ENCODE measurements at regions of chr11 and their contacts with region 1.

Region 1: DNA sequence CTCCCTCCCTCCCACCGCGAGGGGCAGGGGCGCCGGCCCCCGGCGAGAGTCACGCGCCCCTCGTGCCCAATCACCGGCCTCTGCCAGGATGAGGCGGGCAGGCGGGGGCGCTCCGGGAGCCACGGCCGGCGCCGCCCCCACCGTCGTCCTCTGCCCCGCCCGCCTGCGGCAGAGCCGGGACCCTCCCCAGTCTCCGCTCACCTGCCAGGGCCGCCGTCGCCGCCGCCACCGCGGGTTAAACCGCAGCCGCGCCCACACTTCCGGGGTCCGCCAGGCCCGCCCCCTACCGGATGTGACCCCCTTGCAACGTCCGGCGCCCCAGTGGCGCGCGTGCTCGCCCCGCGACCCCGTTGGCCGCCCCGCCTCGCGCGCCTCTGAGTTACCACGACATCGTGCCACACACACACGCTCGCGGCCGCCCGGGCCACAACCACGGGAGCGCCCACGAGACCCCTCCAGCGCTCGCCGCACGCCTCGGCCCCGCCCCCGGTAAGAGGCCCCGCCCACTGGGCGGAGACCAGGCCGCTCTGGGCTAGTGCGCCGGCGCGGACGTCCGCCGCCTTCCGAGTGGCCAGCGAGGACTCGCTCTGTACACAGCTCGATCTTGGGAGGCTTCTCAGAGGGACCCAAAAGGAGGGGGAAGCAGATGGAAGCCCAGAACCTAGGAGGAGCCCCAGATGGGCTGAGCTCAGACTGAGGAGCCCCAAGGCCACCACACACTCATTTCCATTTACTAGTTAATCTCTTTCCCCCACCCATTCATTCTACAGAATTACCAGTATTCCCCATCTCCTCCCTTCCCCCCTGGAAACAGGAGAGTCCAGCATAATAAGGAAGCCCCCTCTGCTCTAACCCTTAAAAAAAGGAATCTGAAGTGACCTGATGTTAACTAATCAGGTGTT is at the start of gene VPS37C:
- DNase-seq: peak; percentile 90 to 95 (median 94)
- H3K4me3 ChIP-seq: peak within 1 kb of the TSS; percentile 56 to 76 (median 68)
- H3K4me3 Mint-ChIP-seq: peak within 1 kb of the TSS; percentile 85 to 93
- H3K27ac ChIP-seq: peak within 1 kb of the TSS; percentile 93 to 100
- H3K27ac Mint-ChIP-seq: peak within 1 kb of the TSS; percentile 99 to 100 (median 100)
- H3K4me1 ChIP-seq: peaks cover 64 to 71% of the 10 kb centered on the region in 2 donors
- H3K4me1 Mint-ChIP-seq: peaks cover 75% of the 10 kb centered on the region
- H3K27me3 ChIP-seq: no peaks in the 10 kb centered on the region
- H3K27me3 Mint-ChIP-seq: peaks cover 0 to 10% (median 0%) of the 10 kb centered on the region in 3 donors
- CTCF ChIP-seq: no peak
- polyA plus RNA-seq, gene VPS37C: 1.9 to 25.1 (median 3.8) TPM

Region 2: GRCh38 chr11:59967677-59968394 is 1193.6 kb before region 1 on chr11:
- intact Hi-C with region 1: no loop called
- DNase-seq: no peak
- H3K4me3 ChIP-seq: no peak overlapping the region
- H3K4me3 Mint-ChIP-seq: no peak overlapping the region
- H3K27ac ChIP-seq: no peak overlapping the region
- H3K27ac Mint-ChIP-seq: no peak overlapping the region
- H3K4me1 ChIP-seq: no peaks in the 10 kb centered on the region
- H3K4me1 Mint-ChIP-seq: no peaks in the 10 kb centered on the region
- H3K27me3 ChIP-seq: no peaks in the 10 kb centered on the region
- H3K27me3 Mint-ChIP-seq: peaks cover 0 to under 1% (median 0%) of the 10 kb centered on the region in 3 donors
- CTCF ChIP-seq: no peak

Region 3: DNA sequence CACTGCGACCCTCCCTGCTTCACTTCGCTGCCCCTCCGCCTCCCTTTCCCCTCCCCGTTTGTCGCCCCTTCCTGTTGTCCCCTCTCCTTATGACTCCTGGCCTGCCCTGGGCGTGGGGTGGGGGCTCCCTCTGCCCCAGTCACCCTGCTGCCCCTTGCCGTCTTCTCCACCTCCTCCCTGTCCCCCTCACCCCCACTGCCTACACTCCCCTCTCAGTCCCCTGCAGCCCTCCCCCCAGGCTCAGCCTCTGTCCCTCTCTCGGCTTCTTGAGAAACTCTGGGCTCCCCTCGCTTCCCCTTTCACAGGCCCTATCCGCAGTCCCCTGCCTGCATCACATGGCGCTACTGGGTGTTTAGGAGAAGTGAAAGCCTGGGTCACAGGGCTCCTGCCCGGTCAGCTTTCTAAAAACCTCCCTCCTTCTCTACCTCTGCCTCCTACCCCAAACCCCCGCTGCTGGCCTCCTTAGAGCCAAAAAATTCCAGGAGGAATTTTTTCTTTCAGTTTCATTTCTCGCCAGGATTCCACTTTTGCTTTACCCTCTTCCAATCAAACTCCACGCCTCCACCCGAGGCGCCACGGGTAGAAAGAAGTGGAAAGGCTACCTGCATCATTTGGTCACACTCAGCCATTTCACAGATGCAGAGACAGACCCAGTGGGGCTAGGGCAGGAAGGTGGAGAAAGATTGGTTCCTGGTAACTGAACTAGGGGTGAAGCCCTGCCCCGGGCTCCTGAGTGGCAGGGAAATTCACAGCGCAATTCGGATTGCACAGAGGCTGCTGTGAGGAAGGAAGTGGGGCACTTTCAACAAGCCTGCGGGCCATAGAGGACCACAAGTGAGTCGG is 209.3 kb before region 1 on chr11 and contains the start of gene SLC15A3:
- intact Hi-C with region 1: loop called (anchors 2 to 5 kb)
- DNase-seq: peak; percentile 95 to 98 (median 95)
- H3K4me3 ChIP-seq: peak within 1 kb of the TSS; percentile 74 to 94 (median 82)
- H3K4me3 Mint-ChIP-seq: peak within 1 kb of the TSS; percentile 95 to 96
- H3K27ac ChIP-seq: peak within 1 kb of the TSS; percentile 99 to 100
- H3K27ac Mint-ChIP-seq: peak within 1 kb of the TSS; percentile 99 to 100 (median 100)
- H3K4me1 ChIP-seq: peaks cover 69 to 85% of the 10 kb centered on the region in 2 donors
- H3K4me1 Mint-ChIP-seq: peaks cover 73% of the 10 kb centered on the region
- H3K27me3 ChIP-seq: no peaks in the 10 kb centered on the region
- H3K27me3 Mint-ChIP-seq: peaks cover 9 to 17% (median 15%) of the 10 kb centered on the region in 3 donors
- CTCF ChIP-seq: no peak
- polyA plus RNA-seq, gene SLC15A3: 27.1 to 121 (median 35.0) TPM

Region 4: GRCh38 chr11:61061081-61061826 is 100.2 kb before region 1 on chr11:
- intact Hi-C with region 1: loop called in 1 of 2 experiments (anchors 10 kb)
- DNase-seq: peak; percentile 91 to 99 (median 93)
- H3K4me3 ChIP-seq: peak overlapping the region in 1 of 3 experiments; percentile 2
- H3K4me3 Mint-ChIP-seq: peak overlapping the region; percentile 34 to 72
- H3K27ac ChIP-seq: peak overlapping the region; percentile 60 to 69
- H3K27ac Mint-ChIP-seq: peak overlapping the region; percentile 89 to 96 (median 94)
- H3K4me1 ChIP-seq: peaks cover 32 to 34% of the 10 kb centered on the region in 2 donors
- H3K4me1 Mint-ChIP-seq: peaks cover 42% of the 10 kb centered on the region
- H3K27me3 ChIP-seq: no peaks in the 10 kb centered on the region
- H3K27me3 Mint-ChIP-seq: peaks cover 3 to 11% (median 4%) of the 10 kb centered on the region in 3 donors
- CTCF ChIP-seq: no peak

Region 5: GRCh38 chr11:61173456-61173855 is 12.0 kb after region 1 on chr11:
- intact Hi-C with region 1: loop called in 1 of 2 experiments (anchors 2 kb)
- DNase-seq: no peak
- H3K4me3 ChIP-seq: no peak overlapping the region
- H3K4me3 Mint-ChIP-seq: no peak overlapping the region
- H3K27ac ChIP-seq: peak overlapping the region in 1 of 2 donors; percentile 78
- H3K27ac Mint-ChIP-seq: peak overlapping the region in 3 of 7 donors; percentile 75 to 85 (median 79)
- H3K4me1 ChIP-seq: peaks cover 35% of the 10 kb centered on the region in 2 donors
- H3K4me1 Mint-ChIP-seq: peaks cover 30% of the 10 kb centered on the region
- H3K27me3 ChIP-seq: no peaks in the 10 kb centered on the region
- H3K27me3 Mint-ChIP-seq: peaks cover 0 to 4% (median 3%) of the 10 kb centered on the region in 3 donors
- CTCF ChIP-seq: no peak

Region 6: GRCh38 chr11:61347916-61348461 is 186.5 kb after region 1 on chr11:
- intact Hi-C with region 1: loop called in 1 of 2 experiments (anchors 5 kb)
- DNase-seq: peak; percentile 95 to 99 (median 96)
- H3K4me3 ChIP-seq: no peak overlapping the region
- H3K4me3 Mint-ChIP-seq: peak overlapping the region in 1 of 2 donors; percentile 31
- H3K27ac ChIP-seq: peak overlapping the region; percentile 83 to 93
- H3K27ac Mint-ChIP-seq: peak overlapping the region; percentile 95 to 99 (median 98)
- H3K4me1 ChIP-seq: peaks cover 23 to 29% of the 10 kb centered on the region in 2 donors
- H3K4me1 Mint-ChIP-seq: peaks cover 34% of the 10 kb centered on the region
- H3K27me3 ChIP-seq: no peaks in the 10 kb centered on the region
- H3K27me3 Mint-ChIP-seq: no peaks in the 10 kb centered on the region
- CTCF ChIP-seq: no peak

Region 7: GRCh38 chr11:61429691-61430582 is 268.5 kb after region 1 on chr11 and contains the starts of genes CPSF7 and SDHAF2:
- intact Hi-C with region 1: loop called in 1 of 2 experiments (anchors 10 kb)
- DNase-seq: peak; percentile 95 to 98 (median 96)
- H3K4me3 ChIP-seq: peak within 1 kb of the TSS; percentile 83 to 96 (median 87)
- H3K4me3 Mint-ChIP-seq: peak within 1 kb of the TSS; percentile 94 to 98
- H3K27ac ChIP-seq: peak within 1 kb of the TSS; percentile 96 to 98
- H3K27ac Mint-ChIP-seq: peak within 1 kb of the TSS; percentile 98 to 100 (median 100)
- H3K4me1 ChIP-seq: peaks cover 17 to 37% of the 10 kb centered on the region in 2 donors
- H3K4me1 Mint-ChIP-seq: peaks cover 36% of the 10 kb centered on the region
- H3K27me3 ChIP-seq: no peaks in the 10 kb centered on the region
- H3K27me3 Mint-ChIP-seq: no peaks in the 10 kb centered on the region
- CTCF ChIP-seq: no peak
- polyA plus RNA-seq, gene CPSF7: 12.5 to 67.5 (median 20.1) TPM
- polyA plus RNA-seq, gene SDHAF2: 45.5 to 70.2 (median 64.8) TPM

Measured in CD14-positive monocyte (primary cell).